H1 (cell line): ENCODE measurements at regions of chr1 and their contacts with region 1.

Region 1: GRCh38 chr1:65020774-65021173 is 54.4 kb upstream of the JAK1 start:
- DNase-seq: no peak
- H3K4me3 ChIP-seq: no peak overlapping the region
- H3K27ac ChIP-seq: no peak overlapping the region
- H3K4me1 ChIP-seq: no peaks in the 10 kb centered on the region
- H3K27me3 ChIP-seq: no peaks in the 10 kb centered on the region
- CTCF ChIP-seq: peak in 2 of 3 experiments; percentile 46 to 68; a peak in 3 of 4 replicates
- EP300 ChIP-seq: no peak
- POLR2A ChIP-seq: no peak
- RAD21 ChIP-seq: peak; percentile 51 to 65; a peak in 3 of 4 replicates

Region 2: DNA sequence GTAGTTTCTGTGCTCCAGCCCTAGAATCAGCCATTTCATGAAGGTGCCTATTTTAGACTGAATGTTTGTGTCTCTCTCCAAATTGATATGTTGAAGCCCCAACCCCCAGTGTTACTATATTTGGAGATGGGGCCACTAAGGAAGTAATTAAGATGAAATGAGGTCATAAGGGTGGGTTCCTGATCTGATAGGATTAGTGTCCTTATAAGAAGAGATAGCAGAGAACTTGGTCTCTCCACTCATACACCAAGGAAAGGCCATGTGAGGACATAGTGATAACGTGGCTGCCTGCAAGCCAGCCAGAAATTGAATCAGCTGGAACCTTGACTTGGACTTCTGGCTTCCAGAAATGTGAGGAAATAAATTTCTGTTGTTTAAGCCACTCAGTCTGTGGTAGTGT is 263.6 kb before region 1 on chr1:
- CTCF ChIA-PET with region 1: no interaction called
- POLR2A ChIA-PET with region 1: no interaction called
- DNase-seq: no peak
- H3K4me3 ChIP-seq: no peak overlapping the region
- H3K27ac ChIP-seq: no peak overlapping the region
- H3K4me1 ChIP-seq: no peaks in the 10 kb centered on the region; a peak in 1 of 7 replicates
- H3K27me3 ChIP-seq: no peaks in the 10 kb centered on the region
- CTCF ChIP-seq: no peak
- EP300 ChIP-seq: no peak
- POLR2A ChIP-seq: no peak
- RAD21 ChIP-seq: no peak

Region 3: DNA sequence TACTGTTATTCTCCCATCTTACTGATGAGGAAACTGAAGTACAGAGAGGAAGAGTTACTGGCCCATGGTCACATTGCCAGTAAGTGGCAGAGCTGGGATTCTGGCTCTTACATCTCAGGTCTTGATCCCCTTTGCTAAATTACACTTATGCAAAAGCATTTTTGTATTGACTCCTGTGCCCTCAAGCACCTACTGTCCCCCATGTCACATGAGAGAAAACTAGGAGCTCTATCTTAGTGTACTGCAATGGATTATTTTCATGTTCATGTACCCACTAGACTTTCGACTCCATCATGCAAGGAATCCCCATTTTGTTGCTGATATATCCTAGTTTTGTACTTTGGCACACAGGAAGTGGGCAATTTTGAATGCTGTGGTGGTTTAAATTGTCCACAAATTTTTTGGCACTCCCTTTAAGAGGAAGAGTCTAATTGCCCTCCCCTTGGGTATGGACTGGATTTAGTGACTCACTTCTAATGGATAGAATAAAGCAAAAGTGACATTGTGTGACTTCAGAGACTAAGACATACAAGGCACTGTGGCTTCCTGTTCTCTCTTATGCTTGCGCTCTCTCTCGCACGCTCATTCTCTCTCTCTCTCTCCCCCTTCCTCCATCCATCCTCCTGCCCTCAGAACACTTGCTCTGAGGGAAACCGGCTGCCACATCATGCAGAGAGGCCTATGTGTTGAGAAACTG is 10.9 kb before region 1 on chr1:
- CTCF ChIA-PET with region 1: interaction called, 26 read pairs
- POLR2A ChIA-PET with region 1: interaction called, 3 read pairs
- DNase-seq: no peak
- H3K4me3 ChIP-seq: no peak overlapping the region
- H3K27ac ChIP-seq: no peak overlapping the region
- H3K4me1 ChIP-seq: no peaks in the 10 kb centered on the region
- H3K27me3 ChIP-seq: peaks cover 0 to 2% (median 0%) of the 10 kb centered on the region in 4 experiments; a peak in 2 of 7 replicates
- CTCF ChIP-seq: no peak
- EP300 ChIP-seq: no peak
- POLR2A ChIP-seq: no peak
- RAD21 ChIP-seq: no peak

Region 4: GRCh38 chr1:65036545-65037180 is 15.9 kb after region 1 on chr1:
- CTCF ChIA-PET with region 1: interaction called, 20 read pairs
- POLR2A ChIA-PET with region 1: interaction called, 7 read pairs
- DNase-seq: no peak
- H3K4me3 ChIP-seq: no peak overlapping the region
- H3K27ac ChIP-seq: no peak overlapping the region
- H3K4me1 ChIP-seq: no peaks in the 10 kb centered on the region
- H3K27me3 ChIP-seq: no peaks in the 10 kb centered on the region
- CTCF ChIP-seq: no peak
- EP300 ChIP-seq: no peak
- POLR2A ChIP-seq: no peak
- RAD21 ChIP-seq: no peak

Region 5: GRCh38 chr1:65049941-65050713 is 29.4 kb after region 1 on chr1:
- CTCF ChIA-PET with region 1: no interaction called
- POLR2A ChIA-PET with region 1: no interaction called
- DNase-seq: no peak
- H3K4me3 ChIP-seq: no peak overlapping the region
- H3K27ac ChIP-seq: no peak overlapping the region
- H3K4me1 ChIP-seq: no peaks in the 10 kb centered on the region
- H3K27me3 ChIP-seq: no peaks in the 10 kb centered on the region; a peak in 1 of 7 replicates
- CTCF ChIP-seq: no peak
- EP300 ChIP-seq: no peak
- POLR2A ChIP-seq: no peak
- RAD21 ChIP-seq: no peak